ENCODE measurements at regions of chr6 and their contacts with region 1.

Region 1: DNA sequence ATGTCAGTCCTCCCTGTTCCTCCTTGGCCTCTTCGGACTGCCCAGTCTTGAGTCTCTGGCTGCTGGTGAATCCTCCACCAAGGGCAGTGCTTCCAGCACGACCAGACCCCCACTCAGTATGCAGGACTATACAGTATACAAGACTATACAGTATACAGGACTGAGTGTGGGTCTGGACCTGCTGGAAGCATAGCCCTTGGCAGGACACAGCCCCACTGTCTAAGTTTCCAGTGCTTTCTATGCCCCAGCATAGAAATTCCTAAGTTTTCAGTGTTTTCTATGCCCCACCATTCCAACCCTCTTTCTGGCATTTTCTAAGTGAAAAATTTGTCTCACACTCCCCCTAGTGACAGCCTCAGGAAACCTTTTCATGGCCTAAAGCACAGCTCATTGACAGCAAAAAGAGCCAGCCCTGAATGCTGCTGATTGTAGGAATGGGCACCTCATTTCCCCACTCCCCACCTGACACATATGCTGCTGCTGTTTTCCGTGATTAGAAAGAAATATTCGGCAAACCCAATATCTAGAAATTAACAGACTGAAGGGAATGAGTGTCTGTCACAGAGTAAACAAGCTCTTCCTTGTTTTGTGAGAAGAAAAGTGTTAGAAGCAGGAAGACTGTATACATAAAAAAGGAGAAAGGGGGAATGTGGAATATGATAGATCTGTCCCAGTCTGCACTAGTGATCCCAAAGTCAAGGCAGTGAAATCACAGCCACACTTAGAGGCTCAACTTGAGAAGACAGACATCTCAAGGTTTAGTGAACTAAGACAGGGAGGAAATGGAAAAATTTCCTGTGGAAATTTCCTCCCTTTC is 206.9 kb downstream of the IBTK start:
- DNase-seq: peak in 1 of 3 donors; percentile 5
- H3K4me3 ChIP-seq: no peak overlapping the region
- H3K4me3 Mint-ChIP-seq: no peak overlapping the region
- H3K27ac ChIP-seq: no peak overlapping the region
- H3K27ac Mint-ChIP-seq: no peak overlapping the region
- H3K4me1 ChIP-seq: no peaks in the 10 kb centered on the region
- H3K4me1 Mint-ChIP-seq: no peaks in the 10 kb centered on the region
- H3K27me3 ChIP-seq: no peaks in the 10 kb centered on the region
- H3K27me3 Mint-ChIP-seq: peaks cover 0 to 3% (median 0%) of the 10 kb centered on the region in 3 donors
- CTCF ChIP-seq: peak; percentile 71

Region 2: DNA sequence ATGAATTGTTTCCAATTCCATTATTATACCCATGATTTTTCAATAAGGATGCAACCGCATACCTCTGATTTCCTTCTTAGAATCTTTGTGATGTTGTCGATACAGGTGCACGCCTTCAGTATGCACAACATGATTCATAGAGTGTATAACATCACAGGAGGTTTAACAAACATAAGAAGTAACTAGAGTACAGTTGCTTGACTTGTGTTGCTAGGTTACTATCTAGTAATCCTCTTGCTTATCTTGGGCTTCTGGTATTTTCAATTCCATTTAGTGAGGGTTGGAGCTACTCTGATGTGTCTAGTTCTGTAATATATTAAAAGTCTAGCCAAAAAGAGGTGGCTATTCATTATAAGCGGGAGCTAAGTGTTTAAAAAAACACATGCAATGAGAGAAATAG is 202.6 kb before region 1 on chr6:
- intact Hi-C with region 1: no loop called
- DNase-seq: no peak
- H3K4me3 ChIP-seq: no peak overlapping the region
- H3K4me3 Mint-ChIP-seq: no peak overlapping the region
- H3K27ac ChIP-seq: no peak overlapping the region
- H3K27ac Mint-ChIP-seq: no peak overlapping the region
- H3K4me1 ChIP-seq: peaks cover 0 to 2% of the 10 kb centered on the region in 2 donors
- H3K4me1 Mint-ChIP-seq: peaks cover 7% of the 10 kb centered on the region
- H3K27me3 ChIP-seq: no peaks in the 10 kb centered on the region
- H3K27me3 Mint-ChIP-seq: peaks cover 0 to 2% (median 0%) of the 10 kb centered on the region in 3 donors
- CTCF ChIP-seq: no peak

Region 3: DNA sequence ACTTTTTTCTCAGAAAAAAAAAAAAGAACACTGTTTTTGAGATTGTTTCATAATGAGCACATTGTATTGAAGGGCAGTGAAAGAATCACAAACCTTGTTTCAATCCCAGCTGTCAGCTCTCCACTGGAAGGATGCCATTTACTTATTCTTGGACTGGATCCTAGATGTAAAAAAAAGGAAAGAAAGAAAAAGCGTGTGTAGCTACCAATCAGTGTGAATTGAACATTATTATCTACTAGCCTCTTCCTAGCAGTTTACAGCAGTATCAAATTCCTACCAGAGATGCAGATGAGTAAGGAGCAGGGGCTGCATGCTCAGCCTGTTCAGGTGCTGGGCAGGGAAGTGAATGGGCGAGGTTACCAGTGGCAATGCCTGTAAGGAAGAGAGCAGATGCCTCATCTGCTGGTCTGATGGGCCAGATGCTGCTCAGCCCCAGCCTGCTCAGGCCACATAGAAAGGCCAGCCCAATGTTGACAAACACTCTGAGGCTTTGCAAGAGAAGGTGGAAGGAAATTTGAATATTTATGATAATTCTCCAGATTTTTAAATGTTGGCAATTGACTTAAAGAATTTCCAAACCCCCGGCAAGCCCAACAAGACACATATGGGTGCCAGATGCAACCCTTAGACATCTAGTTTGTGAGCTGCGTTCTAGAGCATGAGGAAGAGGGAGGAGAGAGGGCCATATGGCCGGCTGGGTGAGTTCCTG is 17.4 kb after region 1 on chr6:
- intact Hi-C with region 1: loop called in 1 of 2 experiments (anchors 1 kb)
- DNase-seq: no peak
- H3K4me3 ChIP-seq: no peak overlapping the region
- H3K4me3 Mint-ChIP-seq: no peak overlapping the region
- H3K27ac ChIP-seq: no peak overlapping the region
- H3K27ac Mint-ChIP-seq: no peak overlapping the region
- H3K4me1 ChIP-seq: no peaks in the 10 kb centered on the region
- H3K4me1 Mint-ChIP-seq: no peaks in the 10 kb centered on the region
- H3K27me3 ChIP-seq: no peaks in the 10 kb centered on the region
- H3K27me3 Mint-ChIP-seq: peaks cover 0 to 4% (median 3%) of the 10 kb centered on the region in 3 donors
- CTCF ChIP-seq: no peak